ENCODE measurements at regions of chr6 and their contacts with region 1.

Region 1: GRCh38 chr6:78867370-78868040 is at the start of gene IRAK1BP1:
- DNase-seq: peak; percentile 90
- H3K4me3 Mint-ChIP-seq: peak within 1 kb of the TSS; percentile 98
- H3K27ac Mint-ChIP-seq: peak within 1 kb of the TSS; percentile 85
- H3K4me1 Mint-ChIP-seq: peaks cover 19% of the 10 kb centered on the region
- H3K27me3 Mint-ChIP-seq: no peaks in the 10 kb centered on the region
- total RNA-seq, gene IRAK1BP1: 2.2 to 2.4 TPM

Region 2: GRCh38 chr6:78619016-78619415 is 248.5 kb before region 1 on chr6:
- CTCF ChIA-PET with region 1: no interaction called
- intact Hi-C with region 1: no loop called
- DNase-seq: no peak
- H3K4me3 Mint-ChIP-seq: no peak overlapping the region
- H3K27ac Mint-ChIP-seq: no peak overlapping the region
- H3K4me1 Mint-ChIP-seq: no peaks in the 10 kb centered on the region
- H3K27me3 Mint-ChIP-seq: peaks cover 2% of the 10 kb centered on the region

Region 3: DNA sequence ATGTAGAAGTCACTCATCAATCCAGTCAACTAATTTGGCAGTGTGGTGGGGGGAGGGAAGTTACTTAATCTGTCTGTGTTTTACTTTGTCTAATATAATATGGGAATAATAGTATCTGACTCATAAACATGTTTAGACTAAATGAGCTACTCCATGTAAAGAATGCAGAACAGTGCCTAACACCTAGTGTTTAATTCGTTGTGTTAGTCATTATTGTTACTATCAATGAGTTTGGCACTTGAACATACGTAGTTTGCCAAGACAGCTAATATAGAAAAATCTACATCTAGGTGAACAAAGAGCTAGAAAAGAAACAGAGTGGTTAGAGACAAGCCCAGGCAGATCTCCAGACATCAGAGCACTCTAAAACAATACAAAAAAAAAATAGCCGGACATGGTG is 48.9 kb after region 1 on chr6:
- CTCF ChIA-PET with region 1: no interaction called
- intact Hi-C with region 1: no loop called
- DNase-seq: no peak
- H3K4me3 Mint-ChIP-seq: no peak overlapping the region
- H3K27ac Mint-ChIP-seq: no peak overlapping the region
- H3K4me1 Mint-ChIP-seq: no peaks in the 10 kb centered on the region
- H3K27me3 Mint-ChIP-seq: peaks cover 18% of the 10 kb centered on the region

Region 4: DNA sequence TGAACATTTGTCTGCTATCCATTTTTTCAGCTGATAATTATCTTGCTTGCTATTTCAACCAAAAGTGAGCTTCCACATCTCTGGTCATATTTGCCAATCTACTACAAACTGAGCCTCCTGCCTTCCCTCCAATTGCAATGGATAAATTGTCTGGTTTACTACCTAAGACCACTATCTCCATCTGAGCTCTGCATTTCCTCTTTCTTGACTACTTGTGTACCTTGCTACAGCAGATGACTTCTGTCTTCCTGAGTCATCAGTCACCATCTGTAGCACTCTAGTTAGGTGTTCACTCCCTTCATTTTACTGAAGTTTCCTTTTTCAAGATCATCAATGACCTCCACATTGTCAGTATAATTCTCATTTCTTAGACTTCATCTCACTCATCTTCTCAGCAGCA is 244.0 kb after region 1 on chr6:
- CTCF ChIA-PET with region 1: no interaction called
- intact Hi-C with region 1: no loop called
- DNase-seq: no peak
- H3K4me3 Mint-ChIP-seq: no peak overlapping the region
- H3K27ac Mint-ChIP-seq: no peak overlapping the region
- H3K4me1 Mint-ChIP-seq: no peaks in the 10 kb centered on the region
- H3K27me3 Mint-ChIP-seq: peaks cover 6% of the 10 kb centered on the region

Region 5: DNA sequence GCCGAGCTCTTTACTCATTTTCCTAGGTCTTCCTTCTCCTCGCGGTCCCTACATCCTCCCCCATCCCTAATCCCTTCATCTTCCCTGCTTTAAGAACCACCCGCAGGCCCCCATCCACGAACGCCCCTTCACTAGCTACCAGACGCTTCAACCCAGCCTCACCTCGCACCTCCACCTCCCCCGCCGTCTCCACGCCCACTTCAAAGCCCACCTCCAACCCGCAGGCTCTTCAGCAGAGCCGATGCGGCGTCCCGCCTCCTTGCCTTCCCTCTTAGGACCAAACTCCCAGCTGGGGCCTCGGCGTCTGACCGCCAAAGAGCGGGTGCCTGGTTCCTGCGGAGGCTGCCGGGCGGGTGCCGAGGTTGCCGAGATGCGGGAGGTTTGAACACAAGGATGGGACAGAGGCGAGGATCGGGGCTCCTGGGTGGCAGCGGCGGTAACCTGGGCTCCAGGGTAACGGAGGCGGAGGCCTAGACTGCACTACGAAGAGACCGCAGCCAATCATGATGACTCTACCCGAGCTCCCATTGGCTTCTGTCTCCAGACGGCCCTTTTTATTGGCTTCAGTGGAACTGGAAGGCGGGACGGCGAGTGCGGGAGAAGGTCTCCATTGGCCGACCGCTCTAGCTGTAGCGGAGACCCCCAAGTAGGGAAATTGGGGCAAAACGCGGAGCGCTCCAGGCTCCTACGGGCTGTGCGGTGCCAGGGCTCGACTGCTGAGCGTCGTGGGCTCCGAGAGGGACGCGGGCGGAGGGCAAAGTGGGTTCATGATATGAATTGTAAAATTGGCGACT is 669.6 kb after region 1 on chr6 and contains the start of gene LCA5:
- CTCF ChIA-PET with region 1: no interaction called
- intact Hi-C with region 1: loop called (anchors 2 kb)
- DNase-seq: peak; percentile 90
- H3K4me3 Mint-ChIP-seq: no peak within 1 kb of the TSS
- H3K27ac Mint-ChIP-seq: no peak within 1 kb of the TSS
- H3K4me1 Mint-ChIP-seq: no peaks in the 10 kb centered on the region
- H3K27me3 Mint-ChIP-seq: peaks cover 8% of the 10 kb centered on the region
- total RNA-seq, gene LCA5: 0.22 to 0.29 TPM

Measured in activated naive CD4-positive, alpha-beta T cell treated with anti-CD3 and anti-CD28 coated beads for 36 hours (primary cell).